Ovary (tissue), 10 donors: ENCODE measurements at regions of chr2 and their contacts with region 1.

Region 1: DNA sequence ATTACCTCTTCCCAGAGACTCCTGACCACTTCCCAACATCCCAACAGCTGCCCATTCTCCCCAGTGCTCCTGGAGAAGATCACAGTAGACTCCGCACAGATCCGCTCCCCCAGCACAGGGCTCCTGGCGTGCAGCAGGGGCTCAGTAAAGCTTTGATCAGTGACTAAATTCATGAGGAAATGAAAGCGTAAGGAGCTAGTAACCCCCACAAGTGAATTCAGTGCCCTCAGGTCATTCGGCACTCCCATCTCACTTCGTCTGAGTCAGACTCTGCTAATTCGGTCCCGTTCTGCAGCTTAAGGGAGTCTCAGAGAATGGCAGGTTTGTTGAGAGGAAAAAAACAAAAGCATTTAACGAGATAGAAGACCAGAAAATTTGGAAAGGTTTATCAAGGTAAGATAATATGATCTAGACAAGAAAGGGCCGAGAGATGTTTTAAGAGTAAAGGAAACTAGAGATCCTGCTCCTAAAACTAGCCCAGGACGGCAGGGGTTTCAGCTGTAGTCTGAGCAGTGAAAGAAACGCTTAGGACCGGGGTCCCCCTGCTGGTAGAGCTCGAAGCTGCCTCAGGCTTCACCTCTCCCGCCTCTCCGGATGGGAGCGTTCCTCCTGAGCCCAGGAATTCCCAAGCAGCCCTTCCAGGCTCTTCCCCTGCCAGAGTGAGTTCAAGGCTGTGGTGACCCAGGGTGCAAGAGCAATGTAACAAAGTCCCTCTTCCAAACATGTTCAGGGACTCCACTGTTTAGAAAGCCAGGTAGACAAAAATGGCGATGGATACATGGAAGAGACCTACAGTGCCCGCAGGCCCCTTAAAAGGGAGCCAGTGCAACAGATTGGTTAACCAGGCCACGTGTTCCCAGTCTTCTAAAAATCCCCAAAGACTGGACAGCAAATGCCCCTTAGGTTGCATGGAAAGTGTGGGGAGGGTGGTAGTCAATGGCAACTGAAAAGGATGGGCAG is 127.3 kb downstream of the DNER start:
- DNase-seq: peak; percentile 79 to 90 (median 88)
- H3K4me3 ChIP-seq: peak overlapping the region; percentile 14
- H3K27ac ChIP-seq: no peak overlapping the region
- H3K4me1 ChIP-seq: peaks cover 3% of the 10 kb centered on the region
- H3K27me3 ChIP-seq: no peaks in the 10 kb centered on the region
- CTCF ChIP-seq: peak; percentile 86 to 88 (median 86)
- EP300 ChIP-seq: no peak
- POLR2A ChIP-seq: no peak

Region 2: GRCh38 chr2:229133155-229133772 is 453.8 kb before region 1 on chr2:
- intact Hi-C with region 1: loop called in 2 of 4 experiments (anchors 10 kb)
- DNase-seq: peak in 1 of 5 donors; percentile 38
- H3K4me3 ChIP-seq: no peak overlapping the region
- H3K27ac ChIP-seq: no peak overlapping the region
- H3K4me1 ChIP-seq: peaks cover 8% of the 10 kb centered on the region
- H3K27me3 ChIP-seq: no peaks in the 10 kb centered on the region
- CTCF ChIP-seq: peak in 2 of 3 donors; percentile 23 to 49
- EP300 ChIP-seq: no peak
- POLR2A ChIP-seq: no peak

Region 3: GRCh38 chr2:229273723-229274338 is 313.2 kb before region 1 on chr2:
- intact Hi-C with region 1: loop called in 1 of 4 experiments (anchors 10 kb)
- DNase-seq: peak; percentile 40 to 63 (median 50)
- H3K4me3 ChIP-seq: peak overlapping the region; percentile 27
- H3K27ac ChIP-seq: no peak overlapping the region
- H3K4me1 ChIP-seq: peaks cover 8% of the 10 kb centered on the region
- H3K27me3 ChIP-seq: no peaks in the 10 kb centered on the region
- CTCF ChIP-seq: peak; percentile 68 to 78 (median 75)
- EP300 ChIP-seq: no peak
- POLR2A ChIP-seq: no peak

Region 4: GRCh38 chr2:229342376-229342775 is 244.7 kb before region 1 on chr2:
- intact Hi-C with region 1: loop called in 2 of 4 experiments (anchors 5 to 10 kb)
- DNase-seq: peak; percentile 57 to 77 (median 66)
- H3K4me3 ChIP-seq: no peak overlapping the region
- H3K27ac ChIP-seq: no peak overlapping the region
- H3K4me1 ChIP-seq: no peaks in the 10 kb centered on the region
- H3K27me3 ChIP-seq: no peaks in the 10 kb centered on the region
- CTCF ChIP-seq: peak in 2 of 3 donors; percentile 9 to 30
- EP300 ChIP-seq: no peak
- POLR2A ChIP-seq: no peak

Region 5: GRCh38 chr2:229431327-229431954 is 155.6 kb before region 1 on chr2:
- intact Hi-C with region 1: loop called in 2 of 4 experiments (anchors 5 to 10 kb)
- DNase-seq: no peak
- H3K4me3 ChIP-seq: no peak overlapping the region
- H3K27ac ChIP-seq: no peak overlapping the region
- H3K4me1 ChIP-seq: no peaks in the 10 kb centered on the region
- H3K27me3 ChIP-seq: no peaks in the 10 kb centered on the region
- CTCF ChIP-seq: peak in 2 of 3 donors; percentile 49 to 51
- EP300 ChIP-seq: no peak
- POLR2A ChIP-seq: no peak

Region 6: GRCh38 chr2:229443546-229444268 is 143.3 kb before region 1 on chr2:
- intact Hi-C with region 1: loop called in 2 of 4 experiments (anchors 5 to 10 kb)
- DNase-seq: no peak
- H3K4me3 ChIP-seq: no peak overlapping the region
- H3K27ac ChIP-seq: peak overlapping the region; percentile 61 to 78
- H3K4me1 ChIP-seq: peaks cover 9% of the 10 kb centered on the region
- H3K27me3 ChIP-seq: no peaks in the 10 kb centered on the region
- CTCF ChIP-seq: no peak
- EP300 ChIP-seq: no peak
- POLR2A ChIP-seq: no peak